SK-MEL-5 (cell line): ENCODE measurements at regions of chr4 and their contacts with region 1.

Region 1: DNA sequence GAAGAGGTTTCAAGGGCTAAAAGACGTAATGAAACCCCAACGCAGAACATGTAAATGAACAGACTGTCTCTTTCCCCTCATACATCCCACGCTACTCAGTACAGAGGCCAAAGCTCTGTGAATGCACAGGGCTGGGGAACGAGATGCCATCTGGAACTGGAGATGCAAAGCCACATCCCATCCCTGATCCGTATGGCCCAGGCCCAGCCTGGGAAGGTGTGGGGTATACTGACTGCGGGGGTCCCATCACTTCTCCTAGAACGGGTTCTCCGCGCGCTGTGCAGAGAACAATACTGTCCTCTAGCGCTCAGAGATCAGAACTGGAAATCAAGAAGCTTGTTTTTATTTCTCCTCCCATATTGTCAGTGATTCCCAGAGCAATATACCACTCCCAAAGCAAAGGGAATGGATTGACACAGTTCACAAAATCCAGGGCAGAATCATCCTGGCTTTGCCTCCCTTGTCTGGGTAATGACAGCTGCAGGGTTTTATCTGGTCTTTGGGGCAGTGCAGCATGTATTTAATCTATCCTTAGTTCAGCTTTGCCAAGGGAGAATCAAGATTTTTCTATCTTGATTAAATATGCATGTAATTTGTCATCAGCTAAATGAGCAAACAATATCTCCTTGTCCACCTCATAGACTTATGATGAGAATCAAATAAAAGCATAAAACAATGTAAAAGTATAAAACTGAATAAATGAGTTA is 47.3 kb upstream of the TLR3 start:
- DNase-seq: peak; percentile 73

Region 2: DNA sequence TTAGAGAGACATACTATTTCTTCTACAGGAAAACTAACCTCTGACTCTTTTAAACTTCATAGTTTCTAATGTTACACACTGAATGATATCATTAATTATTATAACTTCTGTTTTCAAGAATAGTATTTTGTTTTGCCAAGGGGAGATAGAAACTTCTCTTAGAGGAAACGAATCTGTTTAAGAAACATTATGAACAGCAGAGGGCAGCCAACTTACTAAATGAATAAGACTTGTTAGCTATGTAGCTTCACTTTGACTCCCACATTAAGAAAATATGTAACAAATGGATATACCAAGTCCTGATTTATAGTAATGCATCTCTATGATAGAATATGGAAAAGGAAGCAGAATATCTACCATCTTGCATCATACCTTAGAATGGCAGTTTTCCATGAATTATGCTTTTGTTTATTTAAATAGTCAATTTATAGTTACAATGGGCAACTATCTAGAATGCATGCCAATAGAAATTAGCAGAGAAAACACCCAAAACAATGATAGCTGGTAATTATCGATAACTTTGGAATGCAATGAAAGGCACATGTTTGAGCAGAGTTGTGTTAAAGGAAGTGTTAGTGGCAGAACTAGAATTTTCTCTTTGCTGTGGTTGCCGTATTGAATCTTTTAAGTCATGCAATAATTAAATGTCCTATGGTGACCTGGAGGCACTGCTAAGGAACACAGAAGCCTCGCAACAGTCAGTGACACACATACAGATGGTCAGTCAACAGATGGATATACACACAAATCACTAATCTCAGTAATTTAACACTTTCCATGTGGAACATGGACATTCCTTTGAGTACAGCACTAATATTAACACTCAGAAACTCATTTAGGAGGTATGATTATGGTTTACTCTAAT is 380.6 kb before region 1 on chr4:
- in situ Hi-C with region 1: loop called (anchors 10 kb)
- DNase-seq: peak; percentile 85